Activated CD4-positive, alpha-beta memory T cell treated with anti-CD3 and anti-CD28 coated beads, Interleukin-2, amount 10 ng/mL, durations not matched to agents 7 days and 5 days (primary cell): ENCODE measurements at regions of chr17 and their contacts with region 1.

Region 1: DNA sequence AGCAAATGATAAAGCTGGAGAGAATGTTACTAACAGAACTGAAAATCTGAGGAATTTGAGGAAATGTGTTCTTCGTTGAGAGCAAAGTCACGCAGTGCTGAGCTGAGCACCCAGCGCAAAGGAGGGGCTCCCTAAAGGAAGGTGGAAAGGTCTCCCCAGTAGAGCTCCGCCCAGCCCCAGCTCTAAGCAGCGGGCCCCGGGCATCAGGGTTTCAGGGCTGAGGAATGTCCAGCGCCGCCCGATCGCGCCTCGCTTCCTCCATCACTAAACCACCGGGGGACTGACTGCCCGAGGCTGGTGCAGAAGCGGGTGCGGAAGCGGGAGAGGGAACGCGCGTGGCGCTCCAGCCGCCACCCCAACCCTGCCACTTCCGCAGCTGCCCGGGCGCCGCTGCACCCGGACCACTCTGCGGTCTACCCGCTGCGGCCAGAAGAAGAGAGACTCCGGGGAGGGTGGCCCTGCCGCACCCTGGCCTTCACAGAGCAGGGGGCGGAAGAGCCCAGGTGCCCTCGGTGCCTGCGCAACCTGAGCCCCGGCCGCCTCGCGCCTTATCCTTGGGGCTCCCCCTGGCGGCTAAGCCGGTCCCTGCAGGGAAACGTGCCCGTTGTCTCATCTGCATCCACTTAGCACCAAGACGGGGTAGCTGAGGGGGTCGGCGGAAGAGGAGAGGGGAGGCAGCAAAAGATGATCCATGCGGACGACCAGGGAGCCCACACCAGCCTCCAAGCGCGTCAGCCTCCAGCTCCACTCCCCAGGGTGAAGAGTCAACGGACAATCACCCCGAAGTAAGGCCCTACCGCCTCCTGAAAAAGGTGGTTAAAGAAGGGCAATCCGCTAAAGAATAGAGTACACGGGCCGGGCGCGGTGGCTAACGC is 12.4 kb upstream of the GUCY2D start:
- DNase-seq: peak; percentile 92
- H3K4me3 Mint-ChIP-seq: peak overlapping the region; percentile 72
- H3K27ac Mint-ChIP-seq: peak overlapping the region; percentile 75
- H3K4me1 Mint-ChIP-seq: peaks cover 28% of the 10 kb centered on the region
- H3K27me3 Mint-ChIP-seq: peaks cover 10% of the 10 kb centered on the region

Region 2: DNA sequence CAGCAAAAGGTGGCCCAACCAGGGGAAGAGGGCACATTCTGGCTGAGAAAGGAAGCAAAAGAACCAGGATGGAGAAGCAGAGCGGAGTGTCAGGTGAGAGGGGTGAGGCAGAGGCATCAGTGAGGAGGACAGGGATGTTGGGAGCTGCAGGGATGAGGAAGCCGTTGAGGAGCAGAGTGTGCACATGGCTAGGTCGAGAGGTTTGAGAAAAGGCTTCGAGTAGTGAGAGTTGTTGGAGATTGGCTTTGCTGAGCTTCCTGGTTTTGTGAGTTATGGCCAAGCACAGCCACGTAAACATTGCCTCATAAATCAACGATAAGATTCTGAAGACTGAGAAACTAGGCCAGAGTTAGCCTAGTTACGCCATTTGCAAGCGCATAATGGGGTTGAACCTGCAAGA is 245.6 kb before region 1 on chr17:
- CTCF ChIA-PET with region 1: interaction called, 12 read pairs
- POLR2A ChIA-PET with region 1: no interaction called
- DNase-seq: no peak
- H3K4me3 Mint-ChIP-seq: no peak overlapping the region
- H3K27ac Mint-ChIP-seq: no peak overlapping the region
- H3K4me1 Mint-ChIP-seq: no peaks in the 10 kb centered on the region
- H3K27me3 Mint-ChIP-seq: peaks cover 24% of the 10 kb centered on the region

Region 3: GRCh38 chr17:7856883-7857723 is 132.9 kb before region 1 on chr17 and contains the start of gene NAA38:
- CTCF ChIA-PET with region 1: interaction called, 81 read pairs
- POLR2A ChIA-PET with region 1: interaction called, 4 read pairs
- DNase-seq: peak; percentile 97
- H3K4me3 Mint-ChIP-seq: no peak within 1 kb of the TSS
- H3K27ac Mint-ChIP-seq: no peak within 1 kb of the TSS
- H3K4me1 Mint-ChIP-seq: peaks cover 8% of the 10 kb centered on the region
- H3K27me3 Mint-ChIP-seq: no peaks in the 10 kb centered on the region
- total RNA-seq, gene NAA38: 69.8 to 76.9 TPM

Region 4: GRCh38 chr17:7867881-7868329 is 122.1 kb before region 1 on chr17:
- CTCF ChIA-PET with region 1: interaction called, 81 read pairs
- POLR2A ChIA-PET with region 1: interaction called, 3 read pairs
- DNase-seq: peak; percentile 34
- H3K4me3 Mint-ChIP-seq: peak overlapping the region; percentile 33
- H3K27ac Mint-ChIP-seq: peak overlapping the region; percentile 62
- H3K4me1 Mint-ChIP-seq: peaks cover 23% of the 10 kb centered on the region
- H3K27me3 Mint-ChIP-seq: no peaks in the 10 kb centered on the region

Region 5: GRCh38 chr17:7915611-7916382 is 74.2 kb before region 1 on chr17 and contains the start of gene RNF227:
- CTCF ChIA-PET with region 1: interaction called, 104 read pairs
- POLR2A ChIA-PET with region 1: interaction called, 38 read pairs
- DNase-seq: peak; percentile 84
- H3K4me3 Mint-ChIP-seq: peak within 1 kb of the TSS; percentile 90
- H3K27ac Mint-ChIP-seq: peak within 1 kb of the TSS; percentile 88
- H3K4me1 Mint-ChIP-seq: peaks cover 35% of the 10 kb centered on the region
- H3K27me3 Mint-ChIP-seq: no peaks in the 10 kb centered on the region
- total RNA-seq, gene RNF227: 3.6 to 3.7 TPM

Region 6: DNA sequence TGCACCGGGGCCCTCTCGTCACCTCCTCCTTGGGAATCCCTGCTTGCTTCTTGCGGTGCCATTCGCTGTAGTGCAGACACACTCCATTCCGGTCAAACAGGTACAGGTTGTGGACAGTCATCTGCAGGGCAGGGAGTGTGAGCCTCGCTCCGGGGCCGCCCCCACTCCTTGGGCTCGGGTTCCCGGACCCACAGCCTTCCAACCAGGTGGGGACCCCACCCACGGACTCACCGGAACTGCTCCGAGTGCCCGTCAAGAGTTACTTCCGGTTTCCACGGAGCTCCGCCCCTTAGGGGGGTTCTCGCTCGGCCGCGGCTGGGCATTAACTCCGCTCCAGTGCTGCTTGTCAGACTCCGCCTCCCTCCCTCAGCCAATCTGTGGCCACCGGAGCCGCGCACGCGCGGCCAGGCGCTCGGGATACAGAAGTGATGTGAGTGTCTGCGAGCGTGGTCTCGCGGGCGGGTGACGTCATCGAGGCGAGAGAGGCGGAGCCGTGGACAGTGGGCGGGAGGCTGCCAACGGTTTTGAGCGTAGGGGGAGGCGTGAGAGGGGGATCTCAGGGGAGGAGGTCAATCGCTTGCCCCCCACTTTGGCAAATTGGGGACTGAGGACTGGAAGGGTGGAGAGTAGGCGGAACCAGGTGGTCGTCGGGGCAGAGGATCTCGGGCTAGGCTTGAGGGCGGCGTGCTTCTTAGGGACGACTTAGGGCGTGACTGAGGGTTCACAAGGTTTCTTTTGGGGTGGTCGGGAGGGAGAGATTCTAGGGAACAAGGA is 58.1 kb before region 1 on chr17 and contains the starts of genes CNTROB and TRAPPC1:
- CTCF ChIA-PET with region 1: interaction called, 54 read pairs
- POLR2A ChIA-PET with region 1: interaction called, 54 read pairs
- DNase-seq: peak; percentile 100
- H3K4me3 Mint-ChIP-seq: peak within 1 kb of the TSS; percentile 93
- H3K27ac Mint-ChIP-seq: peak within 1 kb of the TSS; percentile 87
- H3K4me1 Mint-ChIP-seq: peaks cover 56% of the 10 kb centered on the region
- H3K27me3 Mint-ChIP-seq: no peaks in the 10 kb centered on the region
- total RNA-seq, gene CNTROB: 58.8 to 64.6 TPM
- total RNA-seq, gene TRAPPC1: 238 to 244 TPM

Region 7: DNA sequence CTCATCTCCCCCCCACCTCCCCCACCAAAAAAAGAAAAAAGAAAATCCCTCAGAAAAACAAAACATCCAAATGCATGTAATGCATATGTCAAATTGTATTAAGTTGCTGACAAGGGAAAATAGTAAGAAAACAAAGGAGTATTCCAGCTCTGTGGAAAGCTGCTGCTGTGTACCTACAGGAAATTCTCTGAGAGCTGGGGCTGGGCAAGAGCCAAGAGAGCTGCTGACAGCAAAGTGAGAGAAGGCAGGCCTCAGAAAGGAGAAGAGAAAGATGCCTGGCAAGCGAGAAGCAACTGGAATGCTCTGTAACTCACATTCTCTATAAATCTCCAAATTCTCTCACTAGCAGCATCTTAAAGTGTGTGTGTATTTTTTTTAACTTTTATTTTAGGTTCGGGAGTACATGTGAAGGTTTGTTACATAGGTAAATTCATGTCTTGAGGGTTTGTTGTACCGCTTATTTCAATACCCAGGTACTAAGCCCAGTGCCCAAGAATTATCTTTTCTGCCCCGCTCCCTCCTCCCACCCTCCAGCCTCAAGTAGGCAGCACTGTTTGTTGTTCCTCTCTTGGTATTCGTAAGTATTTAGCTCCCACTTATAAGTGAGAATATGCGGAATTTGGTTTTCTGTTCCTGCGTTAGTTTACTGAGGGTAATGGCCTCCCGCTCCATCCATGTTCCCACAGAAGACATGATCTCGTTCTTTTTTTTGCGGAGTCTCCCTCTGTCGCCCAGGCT is 33.6 kb before region 1 on chr17:
- CTCF ChIA-PET with region 1: interaction called, 10 read pairs
- POLR2A ChIA-PET with region 1: interaction called, 4 read pairs
- DNase-seq: no peak
- H3K4me3 Mint-ChIP-seq: no peak overlapping the region
- H3K27ac Mint-ChIP-seq: peak overlapping the region; percentile 45
- H3K4me1 Mint-ChIP-seq: peaks cover 27% of the 10 kb centered on the region
- H3K27me3 Mint-ChIP-seq: peaks cover 12% of the 10 kb centered on the region

Region 8: GRCh38 chr17:8048236-8048635 is 58.2 kb after region 1 on chr17:
- CTCF ChIA-PET with region 1: no interaction called
- POLR2A ChIA-PET with region 1: no interaction called
- DNase-seq: no peak
- H3K4me3 Mint-ChIP-seq: no peak overlapping the region
- H3K27ac Mint-ChIP-seq: no peak overlapping the region
- H3K4me1 Mint-ChIP-seq: no peaks in the 10 kb centered on the region
- H3K27me3 Mint-ChIP-seq: peaks cover 5% of the 10 kb centered on the region